ENCODE measurements at regions of chr6 and their contacts with region 1.

Region 1: GRCh38 chr6:32195652-32195901 is 3.1 kb upstream of the GPSM3 start:
- DNase-seq: peak; percentile 96 to 100 (median 97)
- ATAC-seq: peak; percentile 91
- H3K4me3 ChIP-seq: peak overlapping the region; percentile 63
- H3K27ac ChIP-seq: no peak overlapping the region
- H3K4me1 ChIP-seq: peaks cover 60 to 61% of the 10 kb centered on the region in 2 experiments
- H3K27me3 ChIP-seq: no peaks in the 10 kb centered on the region; a peak in 1 of 5 replicates
- CTCF ChIP-seq: peak; percentile 39 to 75 (median 63); a peak in 5 of 6 replicates
- EP300 ChIP-seq: 0 out of 2 replicates have a peak, but pooled peaks have one; percentile 2
- POLR2A ChIP-seq: no peak
- RAD21 ChIP-seq: no peak

Region 2: DNA sequence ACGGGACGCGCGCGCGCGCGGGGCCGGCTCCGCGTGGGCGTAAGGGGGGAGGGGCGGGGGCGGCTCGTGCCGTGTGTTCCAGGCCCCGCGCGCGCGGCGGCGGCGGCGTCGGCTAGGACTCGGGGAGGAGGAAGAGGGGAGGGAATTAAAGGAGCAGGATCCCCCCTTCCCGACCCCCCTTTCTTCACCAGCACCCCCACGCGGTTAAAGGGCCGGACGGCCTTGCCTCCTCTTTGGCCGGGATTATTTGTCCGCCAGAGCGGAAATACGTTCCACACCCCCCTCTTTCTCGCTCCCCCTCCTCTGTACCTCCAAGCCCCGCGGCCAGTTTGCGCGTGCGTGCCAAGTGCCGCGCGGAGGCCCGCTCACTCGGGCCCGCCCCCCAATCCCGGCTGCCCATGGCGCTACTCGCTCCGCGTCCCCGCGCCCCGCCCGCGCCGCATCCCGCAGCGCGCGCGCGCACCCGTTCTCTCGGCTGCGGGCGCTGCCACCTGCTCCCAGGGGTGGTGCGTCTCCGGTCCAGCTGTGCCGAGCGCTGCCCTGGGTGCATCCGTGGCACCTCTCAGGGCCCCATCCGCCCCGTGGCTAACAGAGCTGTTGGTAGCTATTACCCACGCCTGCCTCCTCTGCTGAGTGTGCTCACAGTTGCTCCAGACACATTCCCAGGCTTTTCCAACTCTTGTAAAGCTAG is 293.5 kb before region 1 on chr6 and contains the start of gene ZBTB12:
- CTCF ChIA-PET with region 1: no interaction called
- POLR2A ChIA-PET with region 1: no interaction called
- in situ Hi-C with region 1: no loop called
- intact Hi-C with region 1: loop called (anchors 10 kb)
- DNase-seq: peak; percentile 98
- ATAC-seq: peak; percentile 84
- H3K4me3 ChIP-seq: peak within 1 kb of the TSS; percentile 75
- H3K27ac ChIP-seq: peak within 1 kb of the TSS; percentile 84
- H3K4me1 ChIP-seq: peaks cover 31 to 36% of the 10 kb centered on the region in 2 experiments; a peak in 4 of 5 replicates
- H3K27me3 ChIP-seq: no peaks in the 10 kb centered on the region
- CTCF ChIP-seq: peak in 1 of 3 experiments; percentile 15; a peak in 1 of 6 replicates
- EP300 ChIP-seq: no peak
- POLR2A ChIP-seq: peak; percentile 72
- RAD21 ChIP-seq: peak; percentile 41 to 50
- polyA plus RNA-seq, gene ZBTB12: 0.03 TPM in 1 of 2 experiments, not detected in the other

Region 3: DNA sequence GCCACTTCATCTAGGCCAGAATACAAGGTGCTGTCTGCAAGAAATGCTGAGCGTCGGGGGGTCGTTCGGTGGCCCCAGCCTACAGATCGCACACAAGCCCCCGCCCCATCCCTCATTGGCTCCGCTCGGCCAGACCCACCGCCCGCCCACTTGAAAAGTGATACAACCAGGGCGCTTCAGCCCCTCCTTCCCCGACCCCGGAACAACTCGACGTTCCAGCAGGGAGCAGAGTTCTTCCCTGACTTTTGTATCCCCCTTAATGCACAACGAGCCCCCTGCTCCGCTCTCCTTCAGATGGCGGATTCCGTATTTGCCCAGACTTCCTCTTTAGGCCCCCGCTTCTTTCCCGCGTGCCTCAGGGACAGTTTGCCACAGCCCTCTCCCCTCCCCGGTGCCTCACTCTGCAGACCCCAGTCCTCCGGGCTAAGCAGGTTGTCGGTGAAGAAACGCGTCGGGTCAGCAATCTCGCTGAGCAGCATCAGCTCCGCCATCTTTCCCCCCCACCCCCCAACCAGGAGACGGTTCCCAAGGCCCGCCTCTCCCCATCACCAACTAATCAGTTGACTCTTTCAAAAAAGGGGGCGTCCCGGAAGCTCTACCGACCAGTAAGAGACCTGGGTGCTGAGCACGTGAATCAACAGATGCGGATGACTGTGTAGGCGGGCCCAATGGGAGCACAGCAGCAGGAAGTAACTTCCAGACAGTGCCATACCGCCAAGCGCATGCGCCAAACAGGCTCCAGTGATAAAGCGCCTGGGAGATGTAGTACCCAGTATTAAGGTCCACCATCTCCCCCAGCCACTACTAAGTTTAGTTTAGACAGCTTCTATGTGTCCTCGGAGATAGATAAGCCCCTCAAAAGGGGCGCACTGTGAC is 67.6 kb before region 1 on chr6 and contains the start of gene ATF6B:
- CTCF ChIA-PET with region 1: no interaction called
- POLR2A ChIA-PET with region 1: interaction called, 23 read pairs
- in situ Hi-C with region 1: no loop called
- intact Hi-C with region 1: loop called (anchors 1 kb)
- DNase-seq: peak; percentile 97 to 100 (median 98)
- ATAC-seq: peak; percentile 88
- H3K4me3 ChIP-seq: peak within 1 kb of the TSS; percentile 91
- H3K27ac ChIP-seq: peak within 1 kb of the TSS; percentile 86
- H3K4me1 ChIP-seq: peaks cover 31 to 32% of the 10 kb centered on the region in 2 experiments
- H3K27me3 ChIP-seq: no peaks in the 10 kb centered on the region
- CTCF ChIP-seq: no peak
- EP300 ChIP-seq: peak; percentile 53; the same call in 1 of the 2 replicates
- POLR2A ChIP-seq: peak; percentile 85
- RAD21 ChIP-seq: no peak
- polyA plus RNA-seq, gene ATF6B: 20.7 to 26.1 TPM

Region 4: DNA sequence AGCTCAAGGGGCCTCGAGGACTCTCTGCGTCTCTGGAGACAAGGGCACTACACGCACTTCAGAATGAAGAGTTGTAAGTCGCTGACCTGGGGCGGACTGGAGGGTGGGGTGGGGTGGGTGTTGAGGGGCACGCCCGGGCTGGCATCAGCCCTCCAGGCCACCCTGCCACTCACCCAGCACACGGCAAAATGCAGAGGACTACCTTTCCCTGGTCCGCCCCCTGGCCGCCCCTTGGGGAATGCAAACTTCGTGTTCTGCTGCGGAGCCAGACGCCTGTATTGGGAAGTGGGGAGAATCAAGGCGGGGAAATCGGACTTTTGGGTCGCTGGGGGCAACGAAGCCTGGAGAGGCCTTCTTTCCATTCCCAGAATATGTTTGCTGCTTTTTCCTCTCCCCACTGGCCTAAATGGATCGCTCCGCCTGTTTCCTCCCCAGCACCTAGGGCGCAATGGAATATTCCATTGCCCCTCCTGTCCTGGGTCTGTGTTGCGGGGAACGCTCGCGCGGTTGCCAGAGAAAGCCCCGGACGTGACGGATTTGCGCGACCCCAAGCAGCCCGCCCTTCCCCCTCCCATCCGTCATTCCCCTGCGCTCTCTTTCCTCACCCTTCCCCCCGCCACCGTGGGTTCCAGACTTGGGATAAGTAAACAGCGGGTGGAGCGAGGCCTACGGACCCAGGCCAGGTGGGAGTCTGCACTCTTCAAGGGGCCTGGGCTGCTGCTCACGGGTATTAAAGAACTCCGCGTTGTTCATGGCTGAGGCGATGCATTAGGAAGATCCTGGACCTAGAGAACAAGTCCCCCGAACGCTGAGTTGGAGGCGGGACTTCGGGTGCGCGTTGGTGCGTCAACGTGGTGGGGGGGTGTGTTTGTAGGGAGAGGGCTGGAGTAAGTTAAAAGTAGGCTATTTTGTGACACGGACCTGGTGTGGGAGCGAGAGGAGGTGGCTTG is 41.7 kb before region 1 on chr6 and contains the start of gene PPT2:
- CTCF ChIA-PET with region 1: no interaction called
- POLR2A ChIA-PET with region 1: interaction called, 4 read pairs
- in situ Hi-C with region 1: no loop called
- intact Hi-C with region 1: loop called (anchors 1 kb)
- DNase-seq: peak; percentile 88 to 97 (median 92)
- ATAC-seq: peak; percentile 83
- H3K4me3 ChIP-seq: peak within 1 kb of the TSS; percentile 65
- H3K27ac ChIP-seq: peak within 1 kb of the TSS; percentile 89
- H3K4me1 ChIP-seq: peaks cover 25 to 62% of the 10 kb centered on the region in 2 experiments; a peak in 4 of 5 replicates
- H3K27me3 ChIP-seq: no peaks in the 10 kb centered on the region
- CTCF ChIP-seq: peak; percentile 36 to 47 (median 40); a peak in 4 of 6 replicates
- EP300 ChIP-seq: peak; percentile 34; the same call in 1 of the 2 replicates
- POLR2A ChIP-seq: peak; percentile 82
- RAD21 ChIP-seq: peak; percentile 15 to 30; a peak in 3 of 4 replicates
- polyA plus RNA-seq, gene PPT2: 27.4 to 41.6 TPM

Region 5: DNA sequence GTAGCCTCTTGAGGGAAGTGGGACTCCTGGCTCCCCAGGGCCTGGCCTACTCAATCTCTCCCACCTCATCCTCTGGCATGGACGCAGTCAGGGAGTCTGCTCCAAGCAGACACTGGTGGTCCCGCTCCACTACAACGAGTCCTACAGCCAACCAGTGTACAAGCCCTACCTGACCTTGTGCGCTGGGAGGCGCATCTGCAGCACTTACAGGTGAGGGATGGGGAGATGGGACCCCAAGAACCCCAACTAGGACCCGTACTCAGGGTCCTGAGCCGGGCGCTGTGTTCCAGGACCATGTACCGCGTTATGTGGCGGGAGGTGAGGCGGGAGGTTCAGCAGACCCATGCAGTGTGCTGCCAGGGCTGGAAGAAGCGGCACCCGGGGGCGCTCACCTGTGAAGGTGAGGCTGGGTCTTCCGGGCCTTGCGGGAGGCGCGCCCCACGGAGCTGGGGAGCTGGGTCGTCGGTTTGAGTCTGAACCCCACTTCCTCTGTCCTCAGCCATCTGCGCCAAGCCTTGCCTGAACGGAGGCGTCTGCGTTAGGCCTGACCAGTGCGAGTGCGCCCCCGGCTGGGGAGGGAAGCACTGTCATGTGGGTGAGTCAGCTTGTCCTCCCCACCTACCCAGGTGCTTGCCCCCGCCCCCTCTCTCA is 29.0 kb before region 1 on chr6:
- CTCF ChIA-PET with region 1: no interaction called
- POLR2A ChIA-PET with region 1: interaction called, 3 read pairs
- in situ Hi-C with region 1: no loop called
- intact Hi-C with region 1: loop called (anchors 2 kb)
- DNase-seq: peak; percentile 69 to 77 (median 70)
- ATAC-seq: peak; percentile 62
- H3K4me3 ChIP-seq: no peak overlapping the region
- H3K27ac ChIP-seq: 0 out of 3 replicates have a peak overlapping the region, but pooled peaks have one; percentile 10
- H3K4me1 ChIP-seq: peaks cover 44 to 51% of the 10 kb centered on the region in 2 experiments
- H3K27me3 ChIP-seq: no peaks in the 10 kb centered on the region
- CTCF ChIP-seq: peak; percentile 40 to 59 (median 58)
- EP300 ChIP-seq: no peak
- POLR2A ChIP-seq: no peak; the same call in 1 of the 2 replicates
- RAD21 ChIP-seq: peak in 1 of 2 experiments; percentile 35; a peak in 3 of 4 replicates

Region 6: DNA sequence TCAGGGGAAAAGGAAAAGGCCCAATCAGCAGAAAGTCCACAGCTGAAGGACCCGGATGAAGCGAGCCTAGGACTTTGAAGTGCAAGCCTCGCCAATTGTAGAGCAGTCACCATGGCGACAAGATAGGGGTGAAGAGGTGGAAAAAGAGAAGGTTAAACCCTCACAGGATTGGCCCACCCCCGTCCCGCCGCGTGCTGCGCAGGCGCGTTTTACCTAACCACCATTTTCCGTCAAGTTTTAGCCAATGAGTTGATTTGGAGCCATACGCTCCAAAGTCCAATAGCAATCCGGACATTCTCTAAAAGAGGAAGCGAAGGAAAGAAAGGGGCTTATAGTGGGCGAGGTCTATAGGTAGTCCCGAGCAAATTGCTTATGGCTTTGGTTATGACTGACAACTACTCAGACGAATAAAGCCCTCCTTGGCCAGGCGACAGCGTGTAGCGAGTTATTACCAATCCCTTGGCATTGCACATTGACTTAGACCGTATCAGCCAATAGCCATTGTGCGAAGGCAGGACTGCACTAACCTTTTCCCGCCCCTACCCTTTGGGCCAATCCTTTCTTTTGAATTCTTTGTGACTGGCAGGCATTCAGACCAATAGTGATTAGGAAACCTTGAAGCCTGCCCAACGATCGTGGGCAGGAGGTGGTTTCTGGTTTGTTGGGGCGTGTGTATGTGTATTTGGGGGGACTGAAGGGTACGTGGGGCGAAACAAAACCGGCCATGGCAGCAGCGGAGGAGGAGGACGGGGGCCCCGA is 17.6 kb before region 1 on chr6 and contains the start of gene RNF5:
- CTCF ChIA-PET with region 1: interaction called, 3 read pairs
- POLR2A ChIA-PET with region 1: interaction called, 8 read pairs
- in situ Hi-C with region 1: no loop called
- intact Hi-C with region 1: loop called (anchors 1 kb)
- DNase-seq: peak; percentile 95 to 100 (median 97)
- ATAC-seq: peak; percentile 85
- H3K4me3 ChIP-seq: peak within 1 kb of the TSS; percentile 88
- H3K27ac ChIP-seq: peak within 1 kb of the TSS; percentile 94
- H3K4me1 ChIP-seq: peaks cover 40 to 65% of the 10 kb centered on the region in 2 experiments
- H3K27me3 ChIP-seq: no peaks in the 10 kb centered on the region
- CTCF ChIP-seq: no peak
- EP300 ChIP-seq: no peak; the same call in 1 of the 2 replicates
- POLR2A ChIP-seq: peak; percentile 77
- RAD21 ChIP-seq: no peak
- polyA plus RNA-seq, gene RNF5: 62.2 to 95.5 TPM

Region 7: DNA sequence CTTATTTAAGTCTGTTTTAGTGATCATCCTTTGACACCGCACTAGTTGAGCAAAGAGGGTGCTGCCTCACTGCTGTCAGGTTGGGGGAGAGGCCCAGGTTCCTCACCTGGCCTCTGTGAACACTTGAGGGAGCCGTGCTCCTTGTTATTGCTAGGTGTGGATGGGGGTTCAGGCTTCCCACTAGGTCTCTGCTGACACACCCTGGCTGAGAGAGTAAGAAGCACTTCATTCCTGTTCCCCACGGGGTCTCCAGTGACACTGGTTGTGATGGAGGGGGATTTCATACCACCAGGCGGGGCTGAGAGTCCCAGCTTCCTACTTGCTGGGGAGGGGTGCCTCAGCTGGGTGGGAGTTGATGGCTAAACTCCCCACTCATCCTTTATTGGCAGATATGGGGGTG is 39.4 kb after region 1 on chr6:
- CTCF ChIA-PET with region 1: no interaction called
- POLR2A ChIA-PET with region 1: no interaction called
- in situ Hi-C with region 1: no loop called
- intact Hi-C with region 1: loop called (anchors 1 kb)
- DNase-seq: peak in 2 of 4 experiments; percentile 62 to 63
- ATAC-seq: peak; percentile 95
- H3K4me3 ChIP-seq: no peak overlapping the region
- H3K27ac ChIP-seq: no peak overlapping the region
- H3K4me1 ChIP-seq: no peaks in the 10 kb centered on the region
- H3K27me3 ChIP-seq: peaks cover 3 to 8% of the 10 kb centered on the region in 2 experiments; a peak in 2 of 5 replicates
- CTCF ChIP-seq: peak; percentile 64 to 97 (median 87)
- EP300 ChIP-seq: no peak
- POLR2A ChIP-seq: no peak
- RAD21 ChIP-seq: peak in 1 of 2 experiments; percentile 74; a peak in 2 of 4 replicates

Region 8: GRCh38 chr6:32298663-32299267 is 103.2 kb after region 1 on chr6:
- CTCF ChIA-PET with region 1: no interaction called
- POLR2A ChIA-PET with region 1: no interaction called
- in situ Hi-C with region 1: no loop called
- intact Hi-C with region 1: no loop called
- DNase-seq: no peak
- ATAC-seq: no peak
- H3K4me3 ChIP-seq: no peak overlapping the region
- H3K27ac ChIP-seq: no peak overlapping the region
- H3K4me1 ChIP-seq: no peaks in the 10 kb centered on the region
- H3K27me3 ChIP-seq: no peaks in the 10 kb centered on the region; a peak in 1 of 5 replicates
- CTCF ChIP-seq: no peak
- EP300 ChIP-seq: no peak
- POLR2A ChIP-seq: no peak
- RAD21 ChIP-seq: no peak

Region 9: DNA sequence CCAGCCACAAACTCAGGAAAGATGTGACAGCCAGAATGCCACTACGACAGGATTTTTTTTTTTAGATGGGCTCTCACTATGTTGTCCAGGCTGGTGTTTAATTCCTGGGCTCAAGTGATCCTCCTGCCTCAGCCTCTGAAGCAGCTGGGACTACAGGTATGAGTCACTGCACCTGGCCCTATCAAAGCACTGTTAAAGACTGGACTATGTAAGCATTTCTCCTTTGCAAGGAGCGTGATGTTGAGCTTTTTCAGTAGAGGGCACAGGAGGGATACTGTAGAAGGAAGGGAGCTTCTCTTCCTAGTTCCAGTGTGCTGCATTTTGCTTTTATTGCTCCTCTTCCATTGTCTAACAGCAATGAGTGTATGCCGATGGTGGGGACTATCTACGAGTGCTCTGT is 1294.6 kb after region 1 on chr6:
- CTCF ChIA-PET with region 1: no interaction called
- POLR2A ChIA-PET with region 1: no interaction called
- in situ Hi-C with region 1: no loop called
- intact Hi-C with region 1: no loop called
- DNase-seq: peak in 1 of 4 experiments; percentile 38
- ATAC-seq: peak; percentile 70
- H3K4me3 ChIP-seq: no peak overlapping the region
- H3K27ac ChIP-seq: no peak overlapping the region
- H3K4me1 ChIP-seq: peaks cover 7 to 18% of the 10 kb centered on the region in 2 experiments; a peak in 4 of 5 replicates
- H3K27me3 ChIP-seq: no peaks in the 10 kb centered on the region
- CTCF ChIP-seq: peak in 1 of 3 experiments; percentile 19; a peak in 2 of 6 replicates
- EP300 ChIP-seq: no peak
- POLR2A ChIP-seq: no peak
- RAD21 ChIP-seq: peak in 1 of 2 experiments; percentile 29; a peak in 1 of 4 replicates